Ascending aorta (tissue), 2 donors: ENCODE measurements at regions of chr5 and their contacts with region 1.

Region 1: DNA sequence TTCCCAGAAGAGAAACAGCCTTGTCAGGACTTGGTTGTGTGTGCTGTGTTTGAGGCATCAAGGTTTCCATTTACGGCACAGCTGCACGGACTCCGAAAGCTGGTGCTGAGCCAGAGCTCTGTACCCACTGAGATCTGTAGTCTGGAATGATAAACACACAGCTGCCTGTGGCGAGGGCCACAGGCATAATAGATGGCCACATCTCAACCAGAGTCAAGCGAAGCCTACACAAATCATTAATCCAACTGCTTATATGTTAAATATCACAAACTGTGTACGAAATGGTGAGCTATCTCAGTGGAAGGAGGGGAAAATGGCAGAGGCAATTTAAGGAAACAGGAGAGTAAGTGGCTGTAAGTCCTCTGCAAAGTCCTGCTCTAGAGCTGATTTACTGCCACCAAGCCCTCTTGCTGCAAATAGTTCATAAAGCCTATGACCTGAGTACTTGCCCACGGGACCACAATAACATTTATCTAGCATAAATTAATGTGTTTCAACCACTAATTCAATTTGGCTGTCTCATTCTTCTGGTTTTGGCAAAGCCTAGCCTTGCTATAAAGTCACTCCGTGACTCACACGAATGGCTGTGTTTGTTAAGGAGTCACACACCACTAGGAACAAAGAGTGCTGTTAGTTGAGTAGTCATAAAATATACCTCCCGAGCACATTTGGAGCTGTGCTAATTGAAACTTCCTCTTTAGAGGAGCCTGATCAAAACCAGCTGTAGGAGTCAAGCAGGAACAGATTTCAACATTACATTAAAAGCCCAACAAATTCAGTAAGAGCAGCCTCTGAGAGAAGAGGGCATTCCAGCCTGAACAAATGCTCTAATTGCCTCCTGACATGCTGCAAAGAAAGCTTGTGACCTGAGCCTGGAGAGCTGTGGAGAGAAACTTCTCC is 738.6 kb upstream of the ZNF608 start:
- DNase-seq: peak; percentile 62 to 91
- H3K4me3 ChIP-seq: no peak overlapping the region
- H3K27ac ChIP-seq: peak overlapping the region; percentile 76 to 90
- H3K4me1 ChIP-seq: peaks cover 7 to 9% of the 10 kb centered on the region in 2 donors
- H3K27me3 ChIP-seq: no peaks in the 10 kb centered on the region
- CTCF ChIP-seq: no peak

Region 2: DNA sequence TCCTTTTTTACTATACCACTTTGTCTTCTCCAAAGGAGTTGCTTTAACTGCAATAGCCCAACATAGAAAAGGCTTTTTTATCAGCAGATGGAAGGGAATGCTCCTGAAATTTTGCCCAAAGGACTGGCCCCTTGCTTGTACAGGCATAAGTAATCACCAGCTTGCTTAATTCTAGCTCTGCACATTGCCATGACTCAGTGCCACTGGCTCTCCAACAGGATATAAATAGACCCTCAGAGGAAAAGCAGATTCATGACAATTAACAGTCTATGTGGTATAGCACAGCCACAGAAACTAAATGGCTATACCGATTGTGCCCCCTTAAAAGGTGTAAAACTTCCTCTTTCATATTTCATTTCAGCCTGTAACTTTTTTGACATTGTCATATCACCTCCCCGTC is 965.6 kb before region 1 on chr5:
- intact Hi-C with region 1: loop called (anchors 10 kb)
- DNase-seq: peak in 1 of 2 donors; percentile 81
- H3K4me3 ChIP-seq: no peak overlapping the region
- H3K27ac ChIP-seq: peak overlapping the region in 1 of 2 donors; percentile 27
- H3K4me1 ChIP-seq: peaks cover 4 to 15% of the 10 kb centered on the region in 2 donors
- H3K27me3 ChIP-seq: no peaks in the 10 kb centered on the region
- CTCF ChIP-seq: no peak

Region 3: GRCh38 chr5:124748687-124749594 is 736.1 kb before region 1 on chr5:
- intact Hi-C with region 1: loop called (anchors 5 kb)
- DNase-seq: peak; percentile 31 to 79
- H3K4me3 ChIP-seq: peak overlapping the region; percentile 55 to 70
- H3K27ac ChIP-seq: peak overlapping the region; percentile 84 to 93
- H3K4me1 ChIP-seq: no peaks in the 10 kb centered on the region
- H3K27me3 ChIP-seq: no peaks in the 10 kb centered on the region
- CTCF ChIP-seq: no peak

Region 4: DNA sequence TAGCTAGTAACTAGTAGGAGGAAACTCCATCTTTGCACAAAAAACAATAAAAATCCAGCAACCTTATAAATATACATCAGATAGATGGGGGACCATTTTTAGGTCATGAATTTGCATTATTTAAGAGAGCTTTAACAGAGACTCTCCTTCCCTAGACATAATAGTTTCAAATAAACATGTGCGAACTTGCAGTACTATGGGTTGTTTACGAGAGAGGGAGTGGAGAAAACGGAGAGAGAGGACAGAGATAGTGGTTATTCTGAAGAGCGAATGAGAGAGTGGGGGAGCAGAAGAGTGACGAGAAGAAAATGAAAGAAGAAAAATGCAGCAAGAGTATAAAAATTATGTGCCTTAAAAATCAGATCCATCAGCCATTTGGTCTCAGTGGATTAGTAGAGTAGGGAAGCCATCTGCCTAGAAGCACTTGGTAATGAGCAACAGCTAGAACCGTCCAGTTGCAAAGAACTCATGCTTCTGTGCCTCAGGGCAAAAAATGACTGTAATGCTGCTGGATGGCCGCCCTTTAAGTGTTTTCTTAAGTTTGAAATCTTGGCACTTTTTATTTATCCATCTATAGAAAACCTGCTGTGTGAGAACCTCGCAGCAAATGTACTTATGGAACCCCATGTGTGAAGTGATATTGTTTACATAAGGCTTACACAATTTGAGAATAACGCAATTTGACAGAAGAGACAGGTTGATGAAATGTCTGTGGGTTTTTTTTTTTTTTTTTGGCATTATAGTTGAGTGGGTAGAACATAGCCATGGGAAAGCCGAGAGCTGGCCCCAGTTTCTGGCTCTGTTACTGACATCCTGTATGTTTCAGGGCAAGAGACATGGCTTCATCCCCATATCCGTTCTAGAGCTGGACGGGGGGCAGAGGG is 642.9 kb before region 1 on chr5:
- intact Hi-C with region 1: loop called (anchors 5 kb)
- DNase-seq: no peak
- H3K4me3 ChIP-seq: no peak overlapping the region
- H3K27ac ChIP-seq: peak overlapping the region; percentile 41 to 63
- H3K4me1 ChIP-seq: no peaks in the 10 kb centered on the region
- H3K27me3 ChIP-seq: no peaks in the 10 kb centered on the region
- CTCF ChIP-seq: no peak

Region 5: GRCh38 chr5:124902097-124902821 is 582.7 kb before region 1 on chr5:
- intact Hi-C with region 1: loop called (anchors 5 kb)
- DNase-seq: no peak
- H3K4me3 ChIP-seq: no peak overlapping the region
- H3K27ac ChIP-seq: no peak overlapping the region
- H3K4me1 ChIP-seq: peaks cover 1 to 14% of the 10 kb centered on the region in 2 donors
- H3K27me3 ChIP-seq: no peaks in the 10 kb centered on the region
- CTCF ChIP-seq: no peak

Region 6: DNA sequence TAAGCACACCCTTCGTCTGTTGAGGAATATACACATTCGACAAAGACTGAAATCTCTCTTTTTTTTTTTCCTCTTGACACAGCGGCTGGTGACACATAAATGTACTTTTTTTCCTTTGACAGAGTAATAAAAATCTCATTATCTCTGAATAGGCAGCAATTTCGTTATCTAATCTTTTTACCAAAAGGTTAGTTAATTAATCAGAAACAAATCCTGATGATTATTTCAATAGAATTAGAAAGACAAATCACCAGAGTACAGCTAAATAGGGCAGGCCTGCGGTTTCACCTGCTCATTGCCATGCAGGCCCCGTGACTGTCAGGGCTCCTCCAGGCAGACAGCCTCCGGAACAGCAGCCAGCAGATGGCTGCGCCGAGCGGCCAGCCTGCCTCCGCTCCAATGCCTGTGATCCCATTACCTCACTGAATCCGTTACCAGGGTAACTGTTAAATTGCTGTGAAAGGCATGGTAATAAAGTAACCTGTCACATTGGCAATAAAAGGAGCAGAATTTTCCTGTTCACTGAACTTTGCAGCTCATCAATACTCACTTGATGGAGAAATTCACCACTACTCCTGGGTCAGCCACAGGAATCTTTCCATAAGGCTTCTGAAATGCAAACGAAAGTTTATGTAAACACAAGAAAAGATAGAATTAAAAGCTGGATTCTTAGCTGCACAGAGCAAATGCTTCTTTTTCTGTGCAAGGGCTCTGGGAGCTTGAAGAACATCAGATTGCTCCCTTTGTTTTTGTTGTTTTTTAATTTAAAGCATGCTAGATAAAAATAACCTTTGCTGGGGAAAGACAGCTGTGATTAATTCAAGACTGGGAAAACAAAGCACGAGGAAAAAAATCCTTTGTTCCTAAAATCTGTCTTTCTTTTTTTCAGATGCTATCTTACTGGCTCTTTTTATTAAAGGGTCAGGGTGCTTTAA is 72.2 kb before region 1 on chr5:
- intact Hi-C with region 1: loop called (anchors 2 kb)
- DNase-seq: peak in 1 of 2 donors; percentile 80
- H3K4me3 ChIP-seq: peak overlapping the region; percentile 1 to 48
- H3K27ac ChIP-seq: peak overlapping the region in 1 of 2 donors; percentile 69
- H3K4me1 ChIP-seq: peaks cover 3 to 31% of the 10 kb centered on the region in 2 donors
- H3K27me3 ChIP-seq: no peaks in the 10 kb centered on the region
- CTCF ChIP-seq: peak in 2 of 3 experiments; percentile 45 to 51

Region 7: DNA sequence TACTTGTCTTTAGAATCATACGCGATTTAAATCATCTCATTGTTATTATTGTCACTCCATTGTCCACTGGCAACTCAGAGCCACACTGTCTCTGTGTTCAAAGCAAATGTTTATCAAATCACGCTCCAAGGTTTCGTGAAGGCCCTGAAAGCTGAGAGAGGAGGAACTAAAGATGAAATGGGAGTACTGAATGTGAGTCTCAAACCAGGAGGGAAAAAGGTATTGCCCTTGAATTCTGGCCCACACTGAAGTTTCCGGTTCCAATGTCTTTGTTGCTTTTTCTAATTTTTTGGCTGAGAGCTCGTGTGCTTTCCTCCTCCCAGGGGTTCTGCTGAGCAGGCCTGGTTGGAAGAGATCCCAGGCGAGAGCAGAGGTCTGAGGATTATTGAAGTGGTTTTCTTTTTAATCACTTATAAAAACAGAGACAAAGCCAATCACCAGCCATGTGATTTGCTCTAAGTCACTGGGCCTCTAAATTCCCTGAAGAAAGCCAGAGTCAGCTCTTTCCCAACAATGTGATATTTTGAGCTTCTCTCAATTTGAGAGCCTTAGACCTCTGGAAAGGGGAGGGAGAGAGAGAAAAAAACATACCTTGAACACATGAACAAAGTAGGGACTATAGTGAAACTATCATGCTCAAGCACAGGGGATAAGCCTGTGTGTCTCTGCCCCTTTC is 517.4 kb after region 1 on chr5:
- intact Hi-C with region 1: loop called (anchors 5 kb)
- DNase-seq: peak; percentile 16 to 88
- H3K4me3 ChIP-seq: no peak overlapping the region
- H3K27ac ChIP-seq: peak overlapping the region; percentile 55 to 72
- H3K4me1 ChIP-seq: peaks cover 0 to 21% of the 10 kb centered on the region in 2 donors
- H3K27me3 ChIP-seq: no peaks in the 10 kb centered on the region
- CTCF ChIP-seq: no peak